Ovary (tissue), 10 donors: ENCODE measurements at regions of chr11 and their contacts with region 1.

Region 1: DNA sequence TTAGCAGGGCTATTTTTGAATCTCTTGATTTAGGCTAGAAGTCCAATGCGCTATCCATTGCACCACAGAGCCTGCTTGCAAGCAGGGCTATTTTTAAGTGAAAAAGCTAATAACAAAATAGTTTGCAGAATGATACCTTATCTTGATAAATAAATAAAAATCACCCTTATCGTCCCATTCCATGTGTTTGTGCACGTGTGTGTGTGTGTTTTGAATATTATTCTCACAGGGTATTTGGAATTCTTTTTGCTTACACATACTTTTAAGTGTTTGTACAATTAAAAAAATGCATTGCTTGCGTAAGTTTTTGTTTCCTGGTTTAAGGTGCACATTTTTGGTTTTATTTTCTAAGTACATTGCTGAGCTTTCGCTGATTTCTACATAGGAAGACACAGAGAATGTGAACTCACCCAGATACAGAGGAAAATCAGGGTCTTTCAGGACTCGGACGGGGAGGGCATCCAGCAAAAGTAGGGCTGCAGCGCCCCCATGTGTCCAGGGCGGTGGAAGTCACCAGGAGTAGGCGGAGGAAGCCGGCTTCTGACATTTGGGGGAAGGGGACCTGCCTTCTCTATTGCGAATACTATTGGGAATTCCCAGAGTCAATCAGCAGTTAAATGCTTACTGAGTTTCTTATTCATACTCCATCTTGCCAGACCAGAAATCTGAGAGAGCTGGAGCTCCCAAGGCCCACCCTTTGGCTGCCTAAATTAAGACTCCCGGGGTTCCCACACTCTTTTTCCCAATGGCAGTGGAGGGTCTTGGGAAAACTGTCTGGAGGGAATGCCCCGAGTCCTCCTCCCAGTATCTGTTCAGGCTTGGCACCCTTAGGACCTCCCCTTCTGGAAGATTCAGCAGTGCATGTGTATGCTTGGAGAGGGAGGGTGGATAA is 27.2 kb downstream of the SLC1A2 start:
- DNase-seq: peak; percentile 58 to 83 (median 74)
- H3K4me3 ChIP-seq: no peak overlapping the region
- H3K27ac ChIP-seq: no peak overlapping the region
- H3K4me1 ChIP-seq: no peaks in the 10 kb centered on the region
- H3K27me3 ChIP-seq: no peaks in the 10 kb centered on the region
- CTCF ChIP-seq: peak in 2 of 3 donors; percentile 55 to 65
- EP300 ChIP-seq: no peak
- POLR2A ChIP-seq: no peak

Region 2: DNA sequence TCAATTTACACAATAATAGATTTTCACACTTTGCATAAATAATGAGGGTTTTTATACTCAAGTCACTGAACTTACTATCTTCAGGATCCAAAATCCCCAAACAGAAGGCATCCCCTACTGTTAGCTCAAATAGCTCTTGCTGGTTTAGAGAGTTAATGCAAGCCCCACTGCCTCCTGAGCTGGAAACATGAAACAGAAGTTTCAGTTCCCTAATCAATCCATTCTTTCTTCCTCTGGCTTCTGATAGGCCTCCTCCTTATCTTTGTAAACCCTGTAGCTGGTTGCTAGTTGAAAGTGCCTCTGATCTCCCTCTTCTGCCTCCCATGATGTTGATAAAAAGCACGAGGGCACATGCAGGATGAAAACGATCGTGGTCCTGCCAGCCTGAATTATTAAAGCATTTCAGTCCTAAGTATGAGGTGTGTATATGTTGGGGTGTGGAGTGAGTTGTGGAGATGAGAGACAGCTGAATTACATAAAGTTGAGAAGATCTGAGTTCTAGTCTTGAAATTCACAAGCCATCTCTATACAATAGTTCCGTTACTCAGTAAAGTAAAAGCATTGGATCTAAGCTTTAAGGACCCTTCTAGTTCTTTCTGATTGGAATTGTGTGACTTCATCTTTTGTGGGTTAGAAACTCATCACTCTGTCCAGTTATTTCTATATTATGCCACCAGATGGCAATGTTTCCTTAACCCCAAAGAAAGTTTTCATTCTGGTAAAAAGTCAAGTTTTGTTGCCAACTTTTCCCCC is 806.3 kb before region 1 on chr11:
- intact Hi-C with region 1: loop called in 2 of 4 experiments (anchors 2 to 5 kb)
- DNase-seq: no peak
- H3K4me3 ChIP-seq: no peak overlapping the region
- H3K27ac ChIP-seq: no peak overlapping the region
- H3K4me1 ChIP-seq: no peaks in the 10 kb centered on the region
- H3K27me3 ChIP-seq: no peaks in the 10 kb centered on the region
- CTCF ChIP-seq: peak in 1 of 3 donors; percentile 25
- EP300 ChIP-seq: no peak
- POLR2A ChIP-seq: no peak

Region 3: GRCh38 chr11:34997952-34998528 is 394.1 kb before region 1 on chr11:
- intact Hi-C with region 1: loop called in 1 of 4 experiments (anchors 5 kb)
- DNase-seq: no peak
- H3K4me3 ChIP-seq: no peak overlapping the region
- H3K27ac ChIP-seq: no peak overlapping the region
- H3K4me1 ChIP-seq: no peaks in the 10 kb centered on the region
- H3K27me3 ChIP-seq: no peaks in the 10 kb centered on the region
- CTCF ChIP-seq: no peak
- EP300 ChIP-seq: no peak
- POLR2A ChIP-seq: no peak

Region 4: DNA sequence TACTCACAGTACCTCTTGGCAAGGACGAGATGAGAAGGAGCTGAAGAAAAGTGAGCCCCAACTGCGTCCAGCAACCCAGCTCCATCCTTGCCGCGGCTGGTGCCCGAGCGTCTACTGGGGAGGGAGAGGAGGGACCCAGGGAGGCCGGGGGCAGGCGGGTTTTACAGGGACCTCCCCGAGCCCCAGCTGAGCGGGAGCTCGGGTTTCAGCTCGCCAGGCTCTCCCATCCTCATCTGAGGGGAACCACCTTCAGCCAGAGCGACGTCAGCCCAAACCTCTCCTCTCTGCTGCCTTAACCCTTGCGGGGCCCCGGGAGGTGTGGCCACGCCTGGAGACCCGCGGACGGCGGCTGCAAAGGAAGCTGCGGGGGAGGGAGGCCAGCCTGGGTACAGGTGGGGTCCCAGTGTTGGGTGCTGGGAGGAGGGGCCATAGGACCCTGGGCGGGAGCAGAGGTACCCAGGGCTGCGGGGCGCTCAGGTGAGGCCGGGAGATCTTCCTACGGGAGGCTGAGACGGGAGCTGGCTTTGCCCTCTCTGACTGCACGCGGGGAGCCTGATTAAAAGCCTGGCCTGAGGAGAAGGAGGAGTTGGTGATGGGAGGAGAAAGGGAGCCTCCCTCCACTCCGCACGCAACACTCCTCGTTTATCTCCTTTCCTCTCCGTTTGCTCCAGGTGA is 133.5 kb after region 1 on chr11 and contains the start of gene PAMR1:
- intact Hi-C with region 1: no loop called
- DNase-seq: peak in 3 of 5 donors; percentile 21 to 39 (median 38)
- H3K4me3 ChIP-seq: peak within 1 kb of the TSS; percentile 44
- H3K27ac ChIP-seq: no peak within 1 kb of the TSS
- H3K4me1 ChIP-seq: no peaks in the 10 kb centered on the region
- H3K27me3 ChIP-seq: no peaks in the 10 kb centered on the region
- CTCF ChIP-seq: no peak
- EP300 ChIP-seq: no peak
- POLR2A ChIP-seq: no peak
- total RNA-seq, gene PAMR1: 0.25 to 7.0 (median 3.6) TPM